ENCODE measurements at regions of chr1 and their contacts with region 1.

Region 1: GRCh38 chr1:27772933-27773825 is at the start of gene STX12:
- DNase-seq: peak; percentile 98 to 100 (median 98)
- H3K4me3 ChIP-seq: peak within 1 kb of the TSS; percentile 80 to 96
- H3K4me3 Mint-ChIP-seq: peak within 1 kb of the TSS; percentile 91 to 98 (median 97)
- H3K27ac ChIP-seq: peak within 1 kb of the TSS; percentile 87
- H3K27ac Mint-ChIP-seq: peak within 1 kb of the TSS; percentile 86 to 99 (median 99)
- H3K4me1 ChIP-seq: peaks cover 32% of the 10 kb centered on the region
- H3K4me1 Mint-ChIP-seq: peaks cover 27 to 39% (median 29%) of the 10 kb centered on the region in 4 donors
- H3K27me3 ChIP-seq: no peaks in the 10 kb centered on the region
- H3K27me3 Mint-ChIP-seq: no peaks in the 10 kb centered on the region
- total RNA-seq, gene STX12: 25.2 to 27.5 TPM

Region 2: GRCh38 chr1:27284425-27285273 is 488.5 kb before region 1 on chr1:
- CTCF ChIA-PET with region 1: no interaction called
- POLR2A ChIA-PET with region 1: no interaction called
- intact Hi-C with region 1: no loop called
- DNase-seq: peak; percentile 77 to 85 (median 81)
- H3K4me3 ChIP-seq: no peak overlapping the region
- H3K4me3 Mint-ChIP-seq: no peak overlapping the region
- H3K27ac ChIP-seq: no peak overlapping the region
- H3K27ac Mint-ChIP-seq: peak overlapping the region in 4 of 7 donors; percentile 42 to 73 (median 62)
- H3K4me1 ChIP-seq: no peaks in the 10 kb centered on the region
- H3K4me1 Mint-ChIP-seq: peaks cover 0 to 6% (median under 1%) of the 10 kb centered on the region in 4 donors
- H3K27me3 ChIP-seq: no peaks in the 10 kb centered on the region
- H3K27me3 Mint-ChIP-seq: no peaks in the 10 kb centered on the region

Region 3: DNA sequence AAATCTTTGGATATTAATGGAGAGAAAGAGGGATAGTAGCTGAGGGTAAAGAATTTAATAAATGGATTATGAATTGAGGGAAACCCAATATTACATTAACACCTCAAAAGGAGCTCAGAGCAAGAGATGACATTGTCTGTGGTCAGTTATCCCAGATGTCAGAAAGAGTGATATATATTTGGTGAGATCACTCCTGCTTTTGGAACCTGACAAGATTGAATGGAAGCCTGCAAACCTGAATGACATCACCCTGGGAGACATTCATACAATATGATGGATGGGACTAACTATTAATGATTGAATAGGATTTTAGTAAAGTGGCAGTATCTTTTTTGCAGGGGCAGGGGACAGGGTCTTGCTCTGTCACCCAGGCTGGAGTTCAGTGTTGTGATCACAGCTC is 94.4 kb before region 1 on chr1:
- CTCF ChIA-PET with region 1: no interaction called
- POLR2A ChIA-PET with region 1: no interaction called
- intact Hi-C with region 1: no loop called
- DNase-seq: no peak
- H3K4me3 ChIP-seq: no peak overlapping the region
- H3K4me3 Mint-ChIP-seq: no peak overlapping the region
- H3K27ac ChIP-seq: no peak overlapping the region
- H3K27ac Mint-ChIP-seq: no peak overlapping the region
- H3K4me1 ChIP-seq: no peaks in the 10 kb centered on the region
- H3K4me1 Mint-ChIP-seq: no peaks in the 10 kb centered on the region
- H3K27me3 ChIP-seq: no peaks in the 10 kb centered on the region
- H3K27me3 Mint-ChIP-seq: peaks cover 0 to 2% of the 10 kb centered on the region in 2 donors

Region 4: DNA sequence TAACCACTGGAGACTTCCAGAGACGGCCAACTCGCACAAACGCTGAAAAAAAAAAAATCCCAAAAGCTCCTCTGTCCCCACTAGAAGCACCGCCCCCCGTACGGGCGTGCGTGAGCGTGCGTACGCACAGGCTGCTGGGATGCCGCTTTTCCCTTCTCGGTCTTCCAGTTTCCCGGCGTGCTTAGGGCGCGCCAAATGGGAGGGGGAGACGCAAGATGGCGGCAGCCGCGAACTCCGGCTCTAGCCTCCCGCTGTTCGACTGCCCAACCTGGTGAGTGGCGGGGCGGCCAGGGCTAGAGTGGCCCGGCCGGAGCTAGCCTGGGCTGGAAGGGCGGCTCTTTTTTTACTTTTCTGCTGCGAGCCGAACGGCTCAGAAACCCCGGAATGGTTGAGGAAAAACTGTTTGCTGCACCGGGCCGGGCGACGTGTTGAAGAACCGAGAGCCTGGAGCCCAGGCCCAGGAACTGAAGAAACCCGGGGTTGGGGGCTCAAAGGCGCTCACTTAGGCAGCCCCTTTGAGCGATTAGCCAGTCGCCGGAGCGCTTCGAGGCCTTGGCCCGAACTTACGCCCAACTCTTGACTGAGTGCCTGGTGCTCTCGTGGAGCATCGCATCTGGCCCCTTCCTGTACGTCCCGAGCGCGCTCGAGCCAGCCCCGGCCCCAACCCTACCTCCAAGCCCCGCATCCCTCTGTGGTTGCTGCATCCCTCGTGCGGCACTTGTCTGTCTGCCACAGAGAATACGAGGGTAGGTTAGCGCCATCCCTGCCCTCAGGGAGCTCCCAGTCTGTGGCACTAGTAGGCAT is 57.6 kb after region 1 on chr1 and contains the start of gene PPP1R8:
- CTCF ChIA-PET with region 1: no interaction called
- POLR2A ChIA-PET with region 1: interaction called, 30 read pairs
- intact Hi-C with region 1: loop called (anchors 1 kb)
- DNase-seq: peak; percentile 83 to 90 (median 86)
- H3K4me3 ChIP-seq: peak within 1 kb of the TSS; percentile 76 to 84
- H3K4me3 Mint-ChIP-seq: peak within 1 kb of the TSS; percentile 93 to 97 (median 94)
- H3K27ac ChIP-seq: peak within 1 kb of the TSS; percentile 73
- H3K27ac Mint-ChIP-seq: peak within 1 kb of the TSS; percentile 91 to 97 (median 93)
- H3K4me1 ChIP-seq: peaks cover 44% of the 10 kb centered on the region
- H3K4me1 Mint-ChIP-seq: peaks cover 21 to 46% (median 31%) of the 10 kb centered on the region in 4 donors
- H3K27me3 ChIP-seq: no peaks in the 10 kb centered on the region
- H3K27me3 Mint-ChIP-seq: no peaks in the 10 kb centered on the region
- total RNA-seq, gene PPP1R8: 40.8 to 45.8 TPM

Region 5: GRCh38 chr1:28056129-28056925 is 283.1 kb after region 1 on chr1:
- CTCF ChIA-PET with region 1: no interaction called
- POLR2A ChIA-PET with region 1: no interaction called
- intact Hi-C with region 1: no loop called
- DNase-seq: peak; percentile 33 to 77 (median 45)
- H3K4me3 ChIP-seq: no peak overlapping the region
- H3K4me3 Mint-ChIP-seq: peak overlapping the region in 7 of 8 donors; percentile 19 to 78 (median 49)
- H3K27ac ChIP-seq: peak overlapping the region; percentile 31
- H3K27ac Mint-ChIP-seq: peak overlapping the region; percentile 75 to 95 (median 89)
- H3K4me1 ChIP-seq: peaks cover 38% of the 10 kb centered on the region
- H3K4me1 Mint-ChIP-seq: peaks cover 31 to 49% (median 43%) of the 10 kb centered on the region in 4 donors
- H3K27me3 ChIP-seq: no peaks in the 10 kb centered on the region
- H3K27me3 Mint-ChIP-seq: no peaks in the 10 kb centered on the region